ENCODE measurements at regions of chr6 and their contacts with region 1.

Region 1: DNA sequence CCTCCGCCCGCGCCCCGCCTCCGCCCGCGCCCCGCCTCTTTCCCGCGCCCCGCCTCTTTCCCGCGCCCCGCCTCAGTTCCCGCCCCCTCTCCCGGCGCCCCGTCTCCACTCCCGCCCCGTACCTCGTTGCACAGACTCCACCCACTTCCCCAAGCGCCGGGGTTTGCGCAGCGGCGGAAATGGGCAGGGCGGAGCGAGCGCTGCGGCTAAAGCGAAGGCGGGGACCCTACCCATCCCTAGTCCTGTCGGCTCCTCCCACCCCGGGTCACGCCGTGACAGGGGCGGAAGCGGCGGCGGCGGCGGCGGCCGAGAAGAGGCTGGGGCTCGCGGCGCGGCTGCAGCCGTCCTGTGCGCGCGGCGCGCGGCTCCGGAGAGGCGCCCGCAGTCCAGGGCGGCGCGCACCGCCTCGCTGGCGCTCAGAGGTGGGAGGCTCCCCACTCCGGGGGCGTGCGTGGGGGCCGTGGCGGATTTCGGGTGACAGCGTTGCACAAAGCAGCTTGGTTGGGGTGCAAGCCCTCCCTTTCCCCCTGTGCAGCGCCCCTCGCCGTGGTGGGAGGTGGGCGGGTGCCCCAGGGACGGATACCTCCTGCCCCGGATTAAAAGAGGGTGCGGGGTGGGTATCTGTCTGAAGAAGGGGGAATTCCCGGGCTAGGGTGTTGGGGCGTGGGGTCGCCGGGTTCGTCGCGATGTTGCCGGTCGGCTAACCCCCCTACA is at the start of gene KDM1B:
- DNase-seq: peak; percentile 99
- H3K4me3 ChIP-seq: peak within 1 kb of the TSS; percentile 87 to 96 (median 89)
- H3K27ac ChIP-seq: peak within 1 kb of the TSS; percentile 94 to 98 (median 95)
- H3K4me1 ChIP-seq: peaks cover 0 to 31% (median 17%) of the 10 kb centered on the region in 4 donors
- H3K27me3 ChIP-seq: no peaks in the 10 kb centered on the region
- CTCF ChIP-seq: no peak
- EP300 ChIP-seq: no peak
- POLR2A ChIP-seq: peak; percentile 10
- total RNA-seq, gene KDM1B: 18.9 to 70.7 (median 40.0) TPM

Region 2: GRCh38 chr6:18203786-18204185 is 48.5 kb after region 1 on chr6:
- in situ Hi-C with region 1: no loop called
- intact Hi-C with region 1: no loop called
- DNase-seq: no peak
- H3K4me3 ChIP-seq: no peak overlapping the region
- H3K27ac ChIP-seq: no peak overlapping the region
- H3K4me1 ChIP-seq: no peaks in the 10 kb centered on the region
- H3K27me3 ChIP-seq: no peaks in the 10 kb centered on the region
- CTCF ChIP-seq: no peak
- EP300 ChIP-seq: no peak
- POLR2A ChIP-seq: no peak

Region 3: GRCh38 chr6:18264219-18264922 is 109.1 kb after region 1 on chr6 and contains the start of gene DEK:
- in situ Hi-C with region 1: no loop called
- intact Hi-C with region 1: loop called (anchors 10 kb)
- DNase-seq: peak; percentile 89
- H3K4me3 ChIP-seq: peak within 1 kb of the TSS; percentile 46 to 99 (median 86)
- H3K27ac ChIP-seq: peak within 1 kb of the TSS; percentile 93 to 100 (median 96)
- H3K4me1 ChIP-seq: peaks cover 24 to 39% (median 32%) of the 10 kb centered on the region in 4 donors
- H3K27me3 ChIP-seq: no peaks in the 10 kb centered on the region
- CTCF ChIP-seq: peak in 4 of 5 experiments; percentile 47 to 62 (median 58)
- EP300 ChIP-seq: no peak
- POLR2A ChIP-seq: peak; percentile 30
- total RNA-seq, gene DEK: 96.9 to 175 (median 111) TPM

Region 4: GRCh38 chr6:20135677-20136268 is 1980.5 kb after region 1 on chr6:
- in situ Hi-C with region 1: no loop called
- intact Hi-C with region 1: loop called (anchors 5 kb)
- DNase-seq: no peak
- H3K4me3 ChIP-seq: no peak overlapping the region
- H3K27ac ChIP-seq: peak overlapping the region in 2 of 4 donors; percentile 2 to 36
- H3K4me1 ChIP-seq: peaks cover 0 to 28% (median 20%) of the 10 kb centered on the region in 4 donors
- H3K27me3 ChIP-seq: no peaks in the 10 kb centered on the region
- CTCF ChIP-seq: no peak
- EP300 ChIP-seq: no peak
- POLR2A ChIP-seq: no peak